ENCODE measurements at regions of chr2 and their contacts with region 1.

Region 1: GRCh38 chr2:228048838-228049490 is 132.5 kb downstream of the SPHKAP start:
- H3K4me3 ChIP-seq: no peak overlapping the region
- H3K27ac ChIP-seq: no peak overlapping the region
- H3K4me1 ChIP-seq: no peaks in the 10 kb centered on the region
- CTCF ChIP-seq: no peak

Region 2: DNA sequence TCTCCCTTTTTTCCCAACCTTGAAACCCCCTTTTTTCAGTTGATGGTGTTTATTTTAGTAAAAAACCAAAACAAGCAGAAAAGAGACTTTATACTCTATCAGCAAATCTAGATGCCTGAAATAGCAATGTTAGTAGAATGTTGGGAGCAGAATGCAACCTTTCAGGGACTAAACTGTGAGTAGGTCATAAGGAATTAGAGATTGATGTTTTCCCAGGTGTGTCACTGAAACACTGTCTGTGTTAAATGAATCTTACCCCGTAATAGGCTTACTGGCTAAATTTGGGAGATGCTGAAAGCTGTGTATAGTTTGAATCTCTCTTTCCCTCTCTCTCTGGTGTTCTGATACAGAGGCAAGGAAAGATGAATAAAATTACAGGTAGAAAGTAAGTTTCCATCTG is 533.2 kb before region 1 on chr2:
- CTCF ChIA-PET with region 1: no interaction called
- POLR2A ChIA-PET with region 1: no interaction called
- H3K4me3 ChIP-seq: no peak overlapping the region
- H3K27ac ChIP-seq: no peak overlapping the region
- H3K4me1 ChIP-seq: peaks cover 15% of the 10 kb centered on the region
- CTCF ChIP-seq: no peak

Region 3: DNA sequence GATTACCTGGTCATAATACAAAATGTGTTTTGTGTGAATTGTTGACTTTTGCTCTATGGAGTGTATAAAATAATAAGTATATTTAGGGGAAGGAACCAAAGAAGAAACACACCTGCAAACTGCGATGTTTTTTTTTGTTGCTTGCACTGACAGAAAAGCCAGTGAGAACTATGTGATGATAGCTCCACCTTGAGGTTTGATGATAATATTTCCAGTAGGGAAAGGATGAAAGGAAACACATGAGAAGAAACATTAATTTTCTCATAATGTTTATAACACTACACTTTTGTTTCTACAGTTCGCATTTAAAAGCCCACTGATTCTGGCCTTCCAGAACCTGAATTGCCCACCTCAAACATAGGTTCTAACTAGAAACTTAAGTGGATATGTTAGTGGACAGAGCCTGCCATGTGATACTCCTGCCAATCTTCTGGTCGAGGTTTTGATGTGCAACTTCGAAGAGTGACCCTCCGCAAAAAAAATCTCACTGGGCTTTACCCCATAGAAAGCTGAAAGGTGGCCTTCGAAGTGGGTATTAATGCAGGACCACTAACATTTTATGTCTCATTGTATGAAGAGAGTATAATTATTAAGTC is 608.9 kb after region 1 on chr2:
- CTCF ChIA-PET with region 1: interaction called, 12 read pairs
- POLR2A ChIA-PET with region 1: no interaction called
- H3K4me3 ChIP-seq: no peak overlapping the region
- H3K27ac ChIP-seq: no peak overlapping the region
- H3K4me1 ChIP-seq: no peaks in the 10 kb centered on the region
- CTCF ChIP-seq: no peak

Measured in HEK293 (cell line).